Calu3 (cell line): ENCODE measurements at regions of chr10 and their contacts with region 1.

Region 1: DNA sequence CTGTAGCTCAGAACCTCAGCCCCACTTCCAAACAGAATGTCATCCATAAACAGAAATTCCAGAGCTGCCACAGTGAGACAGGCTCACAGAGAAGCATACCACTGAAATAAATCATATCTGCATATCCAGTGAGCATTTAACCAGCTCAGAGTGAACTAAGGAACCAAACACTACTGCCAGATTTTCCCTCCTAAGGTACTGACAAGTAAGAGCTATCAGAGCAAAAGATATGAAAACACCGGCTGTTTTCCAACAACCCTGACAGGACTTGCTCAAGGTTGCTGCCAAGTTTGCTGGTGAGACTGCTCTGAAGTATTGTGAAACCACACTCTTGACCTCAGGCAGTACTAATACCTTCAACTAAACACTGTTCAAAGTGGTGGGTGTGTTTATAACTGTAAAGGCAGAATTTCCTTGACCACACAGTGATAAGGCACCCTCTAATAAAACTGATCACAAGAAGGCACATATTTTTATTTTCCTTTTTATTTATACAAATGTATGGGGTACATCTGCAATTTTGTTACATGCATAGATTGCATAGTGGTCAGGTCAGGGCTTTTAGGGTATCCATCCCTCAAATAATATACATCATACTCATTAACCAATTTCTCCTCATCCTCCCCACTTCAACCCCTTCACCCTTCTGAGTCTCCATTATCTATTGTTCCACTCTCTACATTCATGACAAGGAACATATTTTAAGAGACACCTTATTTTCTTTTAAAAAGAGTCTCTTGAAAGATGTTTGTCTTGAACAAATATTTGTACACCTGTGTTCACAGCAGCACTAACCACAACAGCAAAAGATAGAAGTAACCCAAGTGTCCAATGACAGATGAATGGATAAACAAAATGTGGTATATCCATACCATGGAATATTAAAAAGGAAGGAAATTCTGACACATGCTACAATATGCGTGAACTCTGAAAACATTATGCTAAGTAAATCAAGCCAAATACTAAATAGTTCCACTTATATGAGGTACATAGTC is 18.2 kb downstream of the SGMS1 start:
- DNase-seq: peak; percentile 50
- H3K4me3 Mint-ChIP-seq: peak overlapping the region; percentile 38
- H3K27ac Mint-ChIP-seq: peak overlapping the region; percentile 5
- H3K4me1 Mint-ChIP-seq: peaks cover 61% of the 10 kb centered on the region
- H3K27me3 Mint-ChIP-seq: no peaks in the 10 kb centered on the region
- CTCF ChIP-seq: no peak

Region 2: DNA sequence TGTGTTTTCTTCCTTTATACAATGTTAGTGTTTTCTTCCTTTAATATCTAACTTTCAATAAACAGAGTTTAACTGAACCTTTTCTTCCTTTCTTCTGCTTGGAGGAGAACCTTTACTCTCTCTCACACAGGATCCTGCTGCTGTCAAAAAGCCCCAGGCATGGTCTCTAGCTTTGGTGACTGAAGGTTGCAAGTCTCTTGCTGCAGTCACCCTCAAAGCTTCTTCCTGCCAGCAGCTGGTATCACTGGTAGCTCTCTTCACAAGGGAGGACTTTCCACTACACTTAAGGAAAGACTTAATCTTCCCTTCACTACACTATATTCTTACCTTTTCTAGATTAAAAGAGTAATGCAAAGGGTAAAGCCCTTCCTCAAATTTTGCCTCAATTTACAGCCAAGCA is 135.2 kb before region 1 on chr10:
- CTCF ChIA-PET with region 1: no interaction called
- intact Hi-C with region 1: no loop called
- DNase-seq: no peak
- H3K4me3 Mint-ChIP-seq: peak overlapping the region; percentile 41
- H3K27ac Mint-ChIP-seq: peak overlapping the region; percentile 92
- H3K4me1 Mint-ChIP-seq: peaks cover 37% of the 10 kb centered on the region
- H3K27me3 Mint-ChIP-seq: no peaks in the 10 kb centered on the region
- CTCF ChIP-seq: no peak

Region 3: GRCh38 chr10:50577681-50578350 is 27.8 kb before region 1 on chr10:
- CTCF ChIA-PET with region 1: interaction called, 6 read pairs
- intact Hi-C with region 1: loop called (anchors 2 kb)
- DNase-seq: peak; percentile 30
- H3K4me3 Mint-ChIP-seq: no peak overlapping the region
- H3K27ac Mint-ChIP-seq: no peak overlapping the region
- H3K4me1 Mint-ChIP-seq: peaks cover 73% of the 10 kb centered on the region
- H3K27me3 Mint-ChIP-seq: no peaks in the 10 kb centered on the region
- CTCF ChIP-seq: no peak

Region 4: GRCh38 chr10:50972591-50972990 is 367.0 kb after region 1 on chr10:
- CTCF ChIA-PET with region 1: interaction called, 11 read pairs
- intact Hi-C with region 1: no loop called
- DNase-seq: peak; percentile 69
- H3K4me3 Mint-ChIP-seq: no peak overlapping the region
- H3K27ac Mint-ChIP-seq: peak overlapping the region; percentile 43
- H3K4me1 Mint-ChIP-seq: peaks cover 29% of the 10 kb centered on the region
- H3K27me3 Mint-ChIP-seq: no peaks in the 10 kb centered on the region
- CTCF ChIP-seq: no peak